Endothelial cell of umbilical vein (primary cell): ENCODE measurements at regions of chr10 and their contacts with region 1.

Region 1: DNA sequence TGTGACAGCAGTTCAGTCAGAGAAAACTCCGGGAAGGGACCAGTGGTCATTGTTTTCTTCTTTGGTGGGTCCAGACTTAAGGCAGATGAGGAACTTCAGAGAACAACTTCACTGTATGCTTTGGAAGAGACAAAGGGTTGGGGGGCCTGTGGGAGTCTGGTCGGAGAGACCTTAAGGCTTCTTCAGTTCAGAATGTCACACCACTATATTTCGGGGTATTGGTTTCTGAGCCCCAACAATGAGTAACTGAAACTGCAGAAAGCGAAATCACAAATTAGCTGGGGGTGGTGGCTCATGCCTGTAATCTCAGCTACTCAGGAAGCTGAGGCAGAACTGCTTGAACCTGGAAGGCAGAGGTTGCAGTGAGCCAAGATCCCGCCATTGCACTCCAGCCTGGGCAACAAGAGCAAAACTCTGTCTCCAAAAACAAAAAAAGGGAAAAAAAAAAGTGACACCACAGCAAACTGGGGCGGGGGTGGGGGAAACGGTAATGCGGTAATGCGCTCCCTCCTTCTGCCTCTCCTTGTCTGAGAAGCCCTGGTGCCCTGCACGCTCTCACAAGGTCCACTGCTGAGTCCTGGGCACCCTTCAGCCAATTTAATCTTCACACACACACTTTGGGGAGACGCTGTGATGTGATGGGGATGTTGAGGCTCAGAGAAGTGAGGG is 2.2 kb upstream of the ADIRF start:
- DNase-seq: no peak
- H3K4me3 ChIP-seq: no peak overlapping the region
- H3K27ac ChIP-seq: no peak overlapping the region
- H3K4me1 ChIP-seq: peaks cover 51% of the 10 kb centered on the region
- H3K27me3 ChIP-seq: no peaks in the 10 kb centered on the region
- CTCF ChIP-seq: no peak
- POLR2A ChIP-seq: no peak

Region 2: GRCh38 chr10:86755740-86756510 is 210.2 kb before region 1 on chr10:
- CTCF ChIA-PET with region 1: no interaction called
- POLR2A ChIA-PET with region 1: no interaction called
- dilution Hi-C with region 1: no loop called
- intact Hi-C with region 1: no loop called
- DNase-seq: no peak
- H3K4me3 ChIP-seq: peak overlapping the region in 2 of 3 experiments; percentile 2 to 26
- H3K27ac ChIP-seq: no peak overlapping the region
- H3K4me1 ChIP-seq: peaks cover 3% of the 10 kb centered on the region
- H3K27me3 ChIP-seq: peaks cover 73 to 85% of the 10 kb centered on the region in 2 experiments
- CTCF ChIP-seq: no peak
- POLR2A ChIP-seq: no peak

Region 3: GRCh38 chr10:86857128-86857721 is 108.9 kb before region 1 on chr10:
- CTCF ChIA-PET with region 1: no interaction called
- POLR2A ChIA-PET with region 1: no interaction called
- dilution Hi-C with region 1: no loop called
- intact Hi-C with region 1: no loop called
- DNase-seq: peak; percentile 31
- H3K4me3 ChIP-seq: no peak overlapping the region
- H3K27ac ChIP-seq: no peak overlapping the region
- H3K4me1 ChIP-seq: peaks cover 2% of the 10 kb centered on the region
- H3K27me3 ChIP-seq: peaks cover 12 to 31% of the 10 kb centered on the region in 2 experiments
- CTCF ChIP-seq: no peak
- POLR2A ChIP-seq: no peak

Region 4: GRCh38 chr10:86936661-86937501 is 29.2 kb before region 1 on chr10:
- CTCF ChIA-PET with region 1: interaction called, 325 read pairs
- POLR2A ChIA-PET with region 1: no interaction called
- dilution Hi-C with region 1: no loop called
- intact Hi-C with region 1: loop called (anchors 1 kb)
- DNase-seq: no peak
- H3K4me3 ChIP-seq: no peak overlapping the region
- H3K27ac ChIP-seq: no peak overlapping the region
- H3K4me1 ChIP-seq: no peaks in the 10 kb centered on the region
- H3K27me3 ChIP-seq: no peaks in the 10 kb centered on the region
- CTCF ChIP-seq: no peak
- POLR2A ChIP-seq: no peak

Region 5: DNA sequence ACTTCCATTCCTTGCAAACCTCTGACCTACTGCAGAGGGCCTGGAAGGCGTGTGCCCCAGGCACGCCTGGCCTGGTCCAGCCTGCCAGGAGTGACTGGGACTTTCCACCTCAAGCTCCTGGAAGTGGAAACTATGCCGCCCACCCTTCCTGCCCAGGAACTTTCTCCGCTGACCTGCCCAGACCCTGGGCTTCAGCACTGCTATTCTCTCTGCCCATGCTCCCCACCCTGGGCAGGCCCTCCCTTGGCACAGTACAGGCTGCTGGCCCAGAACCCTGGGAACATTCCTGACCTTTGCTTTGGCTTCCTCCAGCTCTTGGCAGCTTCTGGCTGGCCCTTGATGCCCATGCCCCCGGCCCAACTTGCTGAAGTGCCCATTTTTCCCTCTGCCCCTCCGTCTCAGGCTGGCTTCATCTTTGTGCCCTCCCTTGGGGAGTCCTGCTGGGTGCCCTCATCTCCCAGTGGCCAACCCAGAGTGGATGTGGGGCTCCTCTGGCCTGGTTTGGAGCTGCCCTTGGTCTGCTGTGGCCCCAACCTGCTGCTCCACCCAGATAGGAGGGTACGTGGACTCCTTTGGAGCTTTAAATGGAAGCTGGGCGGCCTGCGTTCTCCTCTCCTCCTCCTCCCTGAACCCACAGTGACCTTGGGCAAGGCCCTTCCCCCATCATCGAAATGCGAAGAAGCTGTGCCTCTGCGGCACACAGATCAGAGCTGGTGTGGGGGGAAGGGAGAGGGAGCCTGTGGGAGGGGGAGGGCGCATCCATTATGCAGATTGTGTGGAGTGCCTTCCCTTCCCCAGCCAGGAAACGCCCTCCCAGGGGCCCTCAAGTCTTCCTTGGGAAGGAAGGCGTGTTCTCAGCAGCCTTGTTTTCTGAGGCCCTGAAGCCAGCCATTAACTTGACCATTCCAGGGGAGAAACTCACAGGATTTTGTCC is 12.1 kb before region 1 on chr10:
- CTCF ChIA-PET with region 1: interaction called, 110 read pairs
- POLR2A ChIA-PET with region 1: interaction called, 11 read pairs
- dilution Hi-C with region 1: no loop called
- intact Hi-C with region 1: loop called (anchors 1 kb)
- DNase-seq: peak; percentile 89
- H3K4me3 ChIP-seq: peak overlapping the region in 2 of 3 experiments; percentile 7 to 65
- H3K27ac ChIP-seq: peak overlapping the region; percentile 71
- H3K4me1 ChIP-seq: peaks cover 52% of the 10 kb centered on the region
- H3K27me3 ChIP-seq: no peaks in the 10 kb centered on the region
- CTCF ChIP-seq: no peak
- POLR2A ChIP-seq: no peak